Posterior vena cava (tissue), 2 donors: ENCODE measurements at regions of chr5 and their contacts with region 1.

Region 1: DNA sequence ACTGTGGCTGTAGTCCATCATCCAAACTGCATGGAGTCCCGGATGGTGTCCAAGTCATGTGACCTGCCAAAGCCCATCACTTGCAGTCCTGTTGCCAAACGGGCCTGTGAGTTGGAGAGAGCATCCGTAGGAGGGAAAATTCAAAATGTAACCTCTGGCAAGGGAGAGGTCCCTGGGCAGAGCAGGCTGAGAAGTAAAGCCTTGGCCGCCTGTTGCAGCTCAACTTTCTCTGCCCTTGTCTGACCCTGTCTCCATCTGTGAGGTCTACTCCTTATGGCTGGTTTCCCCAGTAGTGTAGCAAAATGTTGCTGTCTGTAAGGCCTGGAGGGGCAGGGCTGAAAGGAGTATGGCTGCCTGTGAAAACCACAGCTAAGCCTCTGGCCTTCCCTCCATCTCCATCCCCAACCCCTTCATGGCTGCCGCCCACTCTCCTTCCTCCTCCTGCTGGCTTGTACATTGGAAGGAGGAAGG is 163.5 kb downstream of the SEMA6A start:
- DNase-seq: no peak

Region 2: GRCh38 chr5:116799401-116799800 is 388.3 kb after region 1 on chr5:
- intact Hi-C with region 1: loop called in 1 of 2 experiments (anchors 5 kb)
- DNase-seq: no peak

Region 3: GRCh38 chr5:116892993-116893392 is 481.9 kb after region 1 on chr5:
- intact Hi-C with region 1: no loop called
- DNase-seq: no peak